Lower leg skin (tissue), 4 donors: ENCODE measurements at regions of chr22 and their contacts with region 1.

Region 1: GRCh38 chr22:20858615-20859416 is at the starts of genes PI4KA and SNAP29:
- DNase-seq: peak; percentile 98 to 100
- H3K4me3 ChIP-seq: peak within 1 kb of the TSS; percentile 92
- CTCF ChIP-seq: no peak
- POLR2A ChIP-seq: no peak
- total RNA-seq, gene PI4KA: 42.5 to 81.3 (median 66.1) TPM
- total RNA-seq, gene SNAP29: 25.0 to 34.4 (median 32.9) TPM

Region 2: DNA sequence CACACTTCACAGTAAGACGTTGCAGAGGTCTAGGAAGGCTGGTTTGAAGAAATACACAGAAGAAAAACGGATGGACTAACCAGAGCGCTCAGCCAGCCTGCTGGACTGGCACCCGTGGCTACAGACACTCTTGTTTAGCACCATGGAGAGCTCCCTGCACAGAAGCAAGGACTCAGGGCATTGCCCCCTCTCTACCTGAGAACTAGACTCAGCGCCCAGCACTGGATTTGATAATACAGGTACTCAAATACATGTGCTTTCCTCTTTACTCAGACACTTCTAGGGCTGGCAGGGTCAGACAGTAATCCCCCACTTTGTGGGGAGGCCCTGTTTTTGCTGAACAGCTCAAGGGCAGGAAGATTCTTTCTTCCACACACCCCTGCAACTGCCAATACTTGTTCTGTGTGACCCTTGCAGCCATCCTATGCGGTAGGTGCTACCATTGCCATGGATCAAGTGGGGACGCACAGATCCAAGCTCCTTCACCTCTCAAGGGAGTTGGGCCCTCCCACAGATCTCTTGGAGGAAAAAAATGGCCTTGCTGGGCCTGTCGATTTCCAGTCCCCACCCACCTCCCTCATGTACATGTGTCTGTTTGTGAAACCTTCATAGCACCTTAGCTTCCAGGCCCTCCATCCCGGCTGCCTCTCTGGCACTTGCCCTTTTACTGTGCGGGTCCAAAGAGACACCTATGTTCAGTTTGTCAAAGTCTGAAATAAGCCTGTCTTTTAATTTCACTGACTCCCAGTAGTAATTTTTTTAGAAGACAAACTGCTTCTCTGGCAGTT is 151.0 kb after region 1 on chr22:
- intact Hi-C with region 1: loop called (anchors 5 kb)
- DNase-seq: no peak
- H3K4me3 ChIP-seq: no peak overlapping the region
- CTCF ChIP-seq: no peak
- POLR2A ChIP-seq: no peak